ENCODE measurements at regions of chr11 and their contacts with region 1.

Region 1: GRCh38 chr11:10653926-10654810 is 39.4 kb downstream of the IRAG1 start:
- DNase-seq: no peak
- H3K4me3 ChIP-seq: no peak overlapping the region
- H3K27ac ChIP-seq: no peak overlapping the region
- H3K4me1 ChIP-seq: peaks cover 0 to 4% (median 0%) of the 10 kb centered on the region in 4 experiments; a peak in 3 of 7 replicates
- H3K27me3 ChIP-seq: no peaks in the 10 kb centered on the region
- CTCF ChIP-seq: peak in 2 of 3 experiments; percentile 65 to 71; a peak in 3 of 4 replicates
- EP300 ChIP-seq: no peak
- POLR2A ChIP-seq: no peak
- RAD21 ChIP-seq: peak; percentile 87 to 90

Region 2: DNA sequence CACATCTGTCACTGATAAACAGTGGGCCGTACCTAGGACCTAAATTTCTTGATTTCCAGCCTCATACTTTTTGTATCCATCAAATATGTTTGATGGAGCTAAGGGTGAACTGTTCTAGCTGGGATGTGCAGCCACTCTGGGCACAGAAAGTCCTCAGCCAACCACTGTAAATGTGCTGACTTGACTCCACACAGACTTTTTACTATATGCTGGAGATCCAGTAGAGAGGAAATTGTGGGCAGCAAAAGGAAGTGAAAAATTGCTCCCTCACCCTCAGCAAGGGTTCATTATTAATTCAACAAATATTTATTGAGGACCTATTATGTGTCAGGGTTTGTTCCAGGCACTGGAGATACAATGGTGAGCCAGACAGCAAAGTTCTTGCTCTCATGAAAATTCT is 253.3 kb before region 1 on chr11:
- CTCF ChIA-PET with region 1: interaction called, 10 read pairs
- POLR2A ChIA-PET with region 1: no interaction called
- DNase-seq: no peak
- H3K4me3 ChIP-seq: no peak overlapping the region
- H3K27ac ChIP-seq: no peak overlapping the region
- H3K4me1 ChIP-seq: no peaks in the 10 kb centered on the region
- H3K27me3 ChIP-seq: no peaks in the 10 kb centered on the region; a peak in 1 of 7 replicates
- CTCF ChIP-seq: no peak
- EP300 ChIP-seq: no peak
- POLR2A ChIP-seq: no peak
- RAD21 ChIP-seq: no peak

Region 3: DNA sequence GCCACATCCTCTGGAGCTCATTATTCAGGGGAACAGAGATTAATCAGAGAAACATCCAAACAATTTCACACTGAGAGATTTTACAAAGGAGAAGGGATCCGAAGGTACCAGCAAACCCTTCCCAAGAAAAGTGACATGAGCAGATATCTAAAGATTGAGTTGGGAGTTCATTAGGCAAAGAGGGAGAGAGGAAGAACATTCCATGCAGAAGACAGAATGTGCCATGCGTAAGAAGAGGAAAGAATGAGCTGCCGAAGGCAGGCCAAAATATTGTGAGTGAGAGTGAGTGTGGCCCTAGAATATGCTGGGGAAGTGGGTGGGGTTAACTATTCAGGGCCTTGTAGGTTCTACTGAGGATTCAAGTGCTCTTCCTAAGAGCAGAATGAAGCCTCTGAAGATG is 35.7 kb before region 1 on chr11:
- CTCF ChIA-PET with region 1: interaction called, 12 read pairs
- POLR2A ChIA-PET with region 1: no interaction called
- DNase-seq: no peak
- H3K4me3 ChIP-seq: no peak overlapping the region
- H3K27ac ChIP-seq: no peak overlapping the region
- H3K4me1 ChIP-seq: no peaks in the 10 kb centered on the region
- H3K27me3 ChIP-seq: no peaks in the 10 kb centered on the region
- CTCF ChIP-seq: no peak
- EP300 ChIP-seq: no peak
- POLR2A ChIP-seq: no peak
- RAD21 ChIP-seq: no peak

Region 4: DNA sequence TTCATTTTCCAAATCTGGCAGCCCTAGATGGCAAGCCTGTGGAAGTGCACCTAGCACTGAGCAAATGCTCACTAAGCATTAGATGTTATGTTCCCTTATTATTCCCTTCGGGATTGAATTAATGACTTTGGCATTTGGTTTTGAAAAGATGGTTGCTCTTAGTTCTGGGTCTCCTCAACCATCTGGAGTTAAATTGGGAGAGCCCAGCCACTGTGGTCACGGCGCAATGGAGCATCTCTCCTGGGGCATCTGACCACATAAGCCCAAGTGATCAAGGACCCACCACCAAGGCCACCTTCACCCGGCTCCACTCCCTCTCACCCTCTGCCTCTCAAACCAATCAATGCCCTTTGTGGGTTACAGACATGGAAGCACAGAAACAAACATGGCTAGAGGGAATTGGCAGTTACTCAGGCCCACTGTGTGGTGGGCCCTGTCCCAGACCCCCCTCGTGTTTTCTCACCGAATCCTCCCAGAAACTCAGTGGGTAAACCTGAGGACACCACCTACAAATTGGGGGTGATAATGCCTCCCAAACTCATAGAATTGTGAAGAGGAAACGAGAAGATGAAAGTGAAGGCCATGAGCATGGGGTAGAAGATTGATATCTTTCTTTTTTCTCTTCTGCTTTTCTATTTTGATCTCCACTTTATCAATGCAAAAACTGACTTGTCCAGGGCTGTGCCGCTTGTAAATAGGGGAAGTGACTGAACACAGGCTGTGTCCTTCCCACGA is 12.8 kb before region 1 on chr11:
- CTCF ChIA-PET with region 1: interaction called, 30 read pairs
- POLR2A ChIA-PET with region 1: no interaction called
- DNase-seq: no peak
- H3K4me3 ChIP-seq: no peak overlapping the region
- H3K27ac ChIP-seq: no peak overlapping the region
- H3K4me1 ChIP-seq: no peaks in the 10 kb centered on the region
- H3K27me3 ChIP-seq: no peaks in the 10 kb centered on the region
- CTCF ChIP-seq: no peak
- EP300 ChIP-seq: no peak
- POLR2A ChIP-seq: no peak
- RAD21 ChIP-seq: no peak

Region 5: GRCh38 chr11:10693509-10694081 is 39.4 kb after region 1 on chr11 and contains the start of gene IRAG1:
- CTCF ChIA-PET with region 1: interaction called, 11 read pairs
- POLR2A ChIA-PET with region 1: no interaction called
- DNase-seq: no peak
- H3K4me3 ChIP-seq: no peak within 1 kb of the TSS
- H3K27ac ChIP-seq: no peak within 1 kb of the TSS
- H3K4me1 ChIP-seq: peaks cover 0 to 6% (median 0%) of the 10 kb centered on the region in 4 experiments; a peak in 1 of 7 replicates
- H3K27me3 ChIP-seq: no peaks in the 10 kb centered on the region
- CTCF ChIP-seq: no peak
- EP300 ChIP-seq: no peak
- POLR2A ChIP-seq: no peak
- RAD21 ChIP-seq: no peak
- total RNA-seq, gene IRAG1: 2.7 and 3.3 TPM in 2 replicates

Region 6: GRCh38 chr11:10725114-10725906 is 71.1 kb after region 1 on chr11:
- CTCF ChIA-PET with region 1: interaction called, 10 read pairs
- POLR2A ChIA-PET with region 1: no interaction called
- DNase-seq: no peak
- H3K4me3 ChIP-seq: no peak overlapping the region
- H3K27ac ChIP-seq: no peak overlapping the region
- H3K4me1 ChIP-seq: peaks cover 0 to 4% (median 0%) of the 10 kb centered on the region in 4 experiments; a peak in 1 of 7 replicates
- H3K27me3 ChIP-seq: no peaks in the 10 kb centered on the region
- CTCF ChIP-seq: no peak
- EP300 ChIP-seq: no peak
- POLR2A ChIP-seq: no peak
- RAD21 ChIP-seq: no peak